Aorta (tissue), 5 donors: ENCODE measurements at regions of chr1 and their contacts with region 1.

Region 1: DNA sequence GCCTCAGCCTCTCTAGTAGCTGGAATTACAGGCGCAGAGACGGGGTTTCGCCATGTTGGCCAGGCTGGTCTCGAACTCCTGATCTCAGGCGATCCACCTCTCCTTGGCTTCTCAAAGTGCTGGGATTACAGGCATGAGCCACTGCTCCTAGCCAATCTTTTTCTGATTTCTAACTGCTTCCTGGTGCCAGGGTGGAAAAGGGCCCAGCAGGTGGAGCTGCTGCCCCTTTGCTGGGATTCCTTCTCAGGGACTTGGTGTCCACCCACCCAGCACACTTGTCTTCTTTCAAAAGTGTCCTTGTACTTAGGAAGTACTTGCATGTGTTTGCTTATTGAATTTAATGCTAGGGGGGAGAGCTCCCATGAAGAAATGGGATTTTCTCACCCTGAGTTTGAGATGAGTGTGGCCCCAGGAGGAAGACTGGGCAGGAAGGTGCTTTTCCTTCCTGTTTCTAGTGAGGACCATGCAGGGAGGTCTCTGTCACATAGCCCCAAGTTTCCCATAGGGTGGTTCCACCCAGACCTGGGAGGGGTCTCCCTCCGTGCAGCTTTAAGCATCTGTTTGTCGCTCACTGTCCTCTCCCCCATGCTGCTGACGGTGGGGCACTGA is 14.2 kb downstream of the UTP11 start:
- DNase-seq: peak in 1 of 2 donors; percentile 69
- ATAC-seq: no peak
- H3K4me3 ChIP-seq: no peak overlapping the region
- H3K27ac ChIP-seq: no peak overlapping the region
- H3K4me1 ChIP-seq: no peaks in the 10 kb centered on the region
- H3K27me3 ChIP-seq: no peaks in the 10 kb centered on the region

Region 2: DNA sequence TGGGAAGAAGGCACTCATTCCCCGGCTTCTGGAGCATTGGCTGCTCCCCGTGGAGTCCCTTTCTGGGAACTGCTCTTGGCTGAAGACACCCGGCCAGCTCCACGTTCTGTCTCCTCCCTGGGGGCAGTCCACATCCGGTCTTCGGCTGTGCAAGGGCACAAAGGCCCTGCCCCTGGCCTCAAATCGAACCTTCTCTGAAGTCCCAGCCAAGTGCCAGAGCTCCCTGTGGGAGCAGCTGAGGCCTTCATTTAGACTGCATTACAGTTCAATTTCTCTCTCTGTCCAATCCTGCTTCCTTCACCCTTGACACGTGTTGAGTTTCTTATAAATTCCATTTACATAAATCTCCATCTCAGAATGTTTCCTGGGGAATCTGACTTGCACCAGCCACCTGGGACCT is 152.8 kb after region 1 on chr1:
- intact Hi-C with region 1: no loop called
- DNase-seq: no peak
- ATAC-seq: no peak
- H3K4me3 ChIP-seq: no peak overlapping the region
- H3K27ac ChIP-seq: no peak overlapping the region
- H3K4me1 ChIP-seq: no peaks in the 10 kb centered on the region
- H3K27me3 ChIP-seq: no peaks in the 10 kb centered on the region

Region 3: GRCh38 chr1:38834937-38835827 is 808.5 kb after region 1 on chr1:
- intact Hi-C with region 1: loop called in 1 of 2 experiments (anchors 10 kb)
- DNase-seq: no peak
- ATAC-seq: peak; percentile 80
- H3K4me3 ChIP-seq: no peak overlapping the region
- H3K27ac ChIP-seq: no peak overlapping the region
- H3K4me1 ChIP-seq: no peaks in the 10 kb centered on the region
- H3K27me3 ChIP-seq: no peaks in the 10 kb centered on the region